GM10248 (cell line): ENCODE measurements at regions of chr12 and their contacts with region 1.

Region 1: DNA sequence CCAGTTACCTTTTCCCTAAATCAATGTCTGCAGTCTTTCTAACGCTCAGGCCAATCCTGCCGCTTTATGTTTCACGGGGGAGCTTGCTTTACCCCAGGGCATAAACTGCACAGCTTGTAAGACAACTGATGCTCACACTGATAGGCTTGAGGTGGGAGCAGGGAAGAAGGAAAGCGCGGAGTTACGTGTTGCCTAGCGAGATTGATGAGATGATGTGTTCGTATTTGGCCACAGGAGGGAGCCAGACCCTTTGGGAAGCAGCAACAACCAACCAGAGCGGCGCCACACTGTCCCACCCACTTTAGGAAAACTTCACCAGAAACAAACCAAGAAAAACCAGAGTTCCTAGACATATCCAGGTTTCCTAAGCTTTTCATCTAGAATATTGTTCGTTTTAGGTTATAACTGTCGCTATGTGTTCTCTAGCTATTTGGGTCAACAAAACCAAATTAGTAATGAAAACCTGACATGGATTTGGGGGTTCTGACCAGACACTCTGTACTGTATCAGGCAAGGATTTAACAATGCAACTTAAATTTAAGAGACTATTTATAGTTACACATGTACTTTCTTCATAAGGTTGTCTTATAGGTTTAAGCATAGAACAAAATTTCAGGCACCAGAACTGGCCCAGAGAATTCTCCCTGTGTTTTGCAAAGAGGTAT is 2.4 kb downstream of the IL26 start:
- DNase-seq: peak; percentile 68
- CTCF ChIP-seq: peak; percentile 86

Region 2: DNA sequence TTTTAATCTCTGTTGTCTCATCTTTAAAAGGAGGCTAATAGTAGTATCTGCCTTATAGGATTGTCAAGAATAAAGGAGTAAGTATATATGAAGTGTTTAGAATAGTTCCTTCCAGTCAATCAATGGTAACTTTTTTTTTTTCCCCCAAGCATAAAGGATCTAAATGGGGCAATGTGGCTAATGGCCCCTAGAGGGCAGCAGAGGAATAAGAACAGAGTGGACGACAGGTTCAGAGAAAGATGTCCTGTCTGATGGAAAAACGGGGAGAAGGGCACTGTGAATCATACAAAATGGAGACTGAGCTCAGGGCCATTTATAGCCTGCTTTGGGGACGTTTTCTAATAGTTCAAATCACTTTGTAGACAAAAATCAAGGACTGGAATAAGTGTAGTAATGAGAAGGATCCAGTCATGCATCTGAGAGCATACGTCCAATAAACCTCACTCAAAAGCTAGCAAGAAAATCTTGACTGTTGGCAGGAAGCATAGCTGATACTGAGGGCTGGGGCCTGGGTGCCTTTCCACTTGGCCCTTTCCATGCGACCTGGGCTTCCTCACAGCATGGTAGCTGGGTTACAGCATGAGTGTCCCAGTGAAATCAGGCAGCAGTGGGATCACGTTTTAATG is 182.7 kb before region 1 on chr12:
- CTCF ChIA-PET with region 1: interaction called, 19 read pairs
- POLR2A ChIA-PET with region 1: no interaction called
- DNase-seq: peak; percentile 67
- CTCF ChIP-seq: peak; percentile 88

Region 3: GRCh38 chr12:68106160-68106559 is 117.1 kb before region 1 on chr12:
- CTCF ChIA-PET with region 1: no interaction called
- POLR2A ChIA-PET with region 1: no interaction called
- DNase-seq: no peak
- CTCF ChIP-seq: no peak

Region 4: DNA sequence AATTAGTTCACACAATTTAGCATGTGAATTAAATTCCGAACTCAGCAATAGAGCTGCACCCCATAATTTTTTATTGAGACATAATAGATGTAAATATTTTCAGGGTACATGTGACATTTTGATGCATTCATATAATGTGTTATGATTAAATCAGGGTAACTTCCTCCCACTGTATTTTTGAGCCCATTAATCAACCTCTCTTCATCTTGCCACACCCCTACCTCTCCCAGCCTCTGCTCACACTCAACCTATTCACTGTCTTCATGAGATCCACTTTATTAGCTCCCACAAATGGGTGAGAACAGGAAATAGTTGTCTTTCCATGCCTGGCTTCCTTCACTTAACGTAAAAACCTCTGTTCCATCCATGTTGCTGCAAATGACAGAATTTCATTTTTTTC is 12.3 kb before region 1 on chr12:
- CTCF ChIA-PET with region 1: interaction called, 10 read pairs
- POLR2A ChIA-PET with region 1: no interaction called
- DNase-seq: no peak
- CTCF ChIP-seq: no peak

Region 5: DNA sequence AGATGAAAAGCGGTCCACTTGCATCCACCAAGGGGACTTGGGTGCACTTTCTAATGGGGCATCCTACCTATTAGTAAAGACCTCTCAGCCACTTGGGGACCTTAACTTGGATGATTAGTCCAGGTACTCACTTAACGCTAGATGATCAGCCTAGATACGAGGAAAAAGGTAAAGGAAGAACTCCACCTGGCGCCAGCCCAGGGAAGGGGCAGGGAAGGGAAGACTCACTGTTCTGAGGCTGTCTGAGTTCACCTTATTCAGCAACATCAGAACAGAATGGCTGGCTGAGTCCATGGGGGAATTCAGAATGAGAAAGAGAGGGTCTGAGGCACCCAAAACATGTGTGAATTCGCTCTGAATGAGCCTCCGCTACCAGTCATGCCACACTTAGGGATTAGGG is 23.1 kb after region 1 on chr12:
- CTCF ChIA-PET with region 1: interaction called, 11 read pairs
- POLR2A ChIA-PET with region 1: no interaction called
- DNase-seq: no peak
- CTCF ChIP-seq: no peak

Region 6: GRCh38 chr12:68310370-68310769 is 87.2 kb after region 1 on chr12:
- CTCF ChIA-PET with region 1: interaction called, 94 read pairs
- POLR2A ChIA-PET with region 1: no interaction called
- DNase-seq: no peak
- CTCF ChIP-seq: no peak

Region 7: GRCh38 chr12:68334132-68334531 is 110.9 kb after region 1 on chr12:
- CTCF ChIA-PET with region 1: interaction called, 12 read pairs
- POLR2A ChIA-PET with region 1: no interaction called
- DNase-seq: peak; percentile 22
- CTCF ChIP-seq: peak; percentile 33